ENCODE measurements at regions of chr11 and their contacts with region 1.

Region 1: GRCh38 chr11:86818466-86819192 is 18.3 kb downstream of the PRSS23 start:
- DNase-seq: no peak
- H3K4me3 ChIP-seq: peak overlapping the region in 1 of 2 donors; percentile 26
- H3K27ac ChIP-seq: no peak overlapping the region
- H3K4me1 ChIP-seq: peaks cover 8 to 41% of the 10 kb centered on the region in 2 donors
- H3K27me3 ChIP-seq: no peaks in the 10 kb centered on the region
- CTCF ChIP-seq: peak; percentile 56 to 73 (median 71)

Region 2: GRCh38 chr11:86302100-86302793 is 516.4 kb before region 1 on chr11 and contains the start of gene HIKESHI:
- intact Hi-C with region 1: loop called (anchors 10 kb)
- DNase-seq: peak; percentile 98 to 100
- H3K4me3 ChIP-seq: peak within 1 kb of the TSS; percentile 84 to 89
- H3K27ac ChIP-seq: peak within 1 kb of the TSS; percentile 86 to 92
- H3K4me1 ChIP-seq: peaks cover 0 to 9% of the 10 kb centered on the region in 2 donors
- H3K27me3 ChIP-seq: no peaks in the 10 kb centered on the region
- CTCF ChIP-seq: no peak
- total RNA-seq, gene HIKESHI: 28.9 TPM

Region 3: DNA sequence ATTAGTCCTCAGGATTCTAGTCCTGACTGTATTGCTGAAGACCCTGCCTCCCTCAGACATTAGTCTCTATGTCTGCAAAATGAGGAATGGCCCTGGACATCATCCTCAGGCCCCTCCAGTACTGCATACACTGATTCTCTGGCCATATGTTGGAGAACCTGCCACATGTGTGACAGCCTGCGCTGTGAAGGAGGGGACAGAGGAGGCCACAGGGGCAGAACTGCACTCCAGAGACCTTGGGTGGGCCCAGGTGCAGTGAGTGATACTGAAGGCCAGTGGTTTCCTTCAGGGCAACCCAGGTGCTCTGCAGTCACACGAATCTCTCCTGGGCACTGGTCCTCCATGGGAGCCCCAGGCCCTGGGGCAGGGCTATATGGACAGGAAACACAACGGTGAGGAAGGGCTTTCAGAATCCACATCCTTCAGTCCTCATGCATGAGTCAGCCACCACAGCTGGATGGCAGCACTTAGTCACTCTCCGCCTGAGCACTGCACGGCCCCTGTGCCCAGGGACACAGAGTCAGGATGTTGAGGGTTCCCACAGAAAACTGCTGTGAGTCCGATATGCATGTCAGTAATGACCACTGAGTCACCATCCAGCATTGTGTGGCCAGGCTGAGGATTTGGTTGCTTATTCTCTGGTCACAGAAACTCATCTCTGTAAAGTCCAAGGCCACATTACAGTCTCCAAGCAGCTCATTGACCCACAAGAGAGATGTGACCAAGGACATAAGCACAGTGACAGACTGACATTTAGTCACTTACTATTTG is 185.9 kb before region 1 on chr11:
- intact Hi-C with region 1: loop called (anchors 2 kb)
- DNase-seq: peak; percentile 35 to 84
- H3K4me3 ChIP-seq: no peak overlapping the region
- H3K27ac ChIP-seq: peak overlapping the region; percentile 37 to 80
- H3K4me1 ChIP-seq: peaks cover 21 to 36% of the 10 kb centered on the region in 2 donors
- H3K27me3 ChIP-seq: no peaks in the 10 kb centered on the region
- CTCF ChIP-seq: peak in 2 of 3 experiments; percentile 32 to 62

Region 4: DNA sequence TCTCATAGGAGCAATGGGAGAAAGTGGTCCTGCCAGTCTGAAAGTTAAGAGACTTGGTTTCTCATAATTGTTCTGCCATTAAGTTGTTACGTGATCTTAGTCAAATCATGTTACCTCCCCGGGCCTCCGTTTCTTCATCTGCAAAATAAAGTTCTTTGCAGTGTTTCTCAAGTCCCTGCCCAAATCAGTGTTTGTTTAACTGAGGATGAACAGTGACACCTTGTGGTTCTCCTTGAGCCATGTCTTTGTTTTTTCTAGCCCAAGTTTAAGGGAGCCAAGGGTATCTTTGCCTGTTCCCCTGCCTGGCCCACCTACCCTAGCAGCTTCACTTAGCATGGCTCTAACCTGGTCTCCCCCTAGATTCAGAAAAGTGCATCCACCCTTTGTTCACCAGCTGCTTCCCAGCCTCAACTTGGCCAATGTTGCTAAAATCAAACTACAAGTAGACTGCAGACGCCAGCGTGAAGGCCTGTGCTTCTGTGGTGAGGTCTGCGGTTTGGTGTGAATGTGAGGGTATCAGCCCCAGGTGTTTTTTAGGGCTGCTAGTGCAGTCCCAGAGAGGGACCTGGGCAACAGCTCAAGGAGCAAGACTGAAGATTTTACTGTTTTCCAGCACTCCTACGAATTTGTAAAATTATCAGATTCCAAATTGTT is 101.1 kb after region 1 on chr11:
- intact Hi-C with region 1: loop called (anchors 5 kb)
- DNase-seq: no peak
- H3K4me3 ChIP-seq: peak overlapping the region in 1 of 2 donors; percentile 6
- H3K27ac ChIP-seq: peak overlapping the region; percentile 85 to 89
- H3K4me1 ChIP-seq: peaks cover 8 to 57% of the 10 kb centered on the region in 2 donors
- H3K27me3 ChIP-seq: no peaks in the 10 kb centered on the region
- CTCF ChIP-seq: peak; percentile 52 to 65 (median 59)

Region 5: GRCh38 chr11:87114093-87114492 is 295.5 kb after region 1 on chr11:
- intact Hi-C with region 1: no loop called
- DNase-seq: no peak
- H3K4me3 ChIP-seq: no peak overlapping the region
- H3K27ac ChIP-seq: peak overlapping the region in 1 of 2 donors; percentile 18
- H3K4me1 ChIP-seq: peaks cover 0 to 10% of the 10 kb centered on the region in 2 donors
- H3K27me3 ChIP-seq: no peaks in the 10 kb centered on the region
- CTCF ChIP-seq: no peak

Region 6: GRCh38 chr11:87180742-87181141 is 362.1 kb after region 1 on chr11:
- intact Hi-C with region 1: no loop called
- DNase-seq: no peak
- H3K4me3 ChIP-seq: no peak overlapping the region
- H3K27ac ChIP-seq: no peak overlapping the region
- H3K4me1 ChIP-seq: peaks cover 0 to 4% of the 10 kb centered on the region in 2 donors
- H3K27me3 ChIP-seq: no peaks in the 10 kb centered on the region
- CTCF ChIP-seq: no peak